ENCODE measurements at regions of chr19 and their contacts with region 1.

Region 1: DNA sequence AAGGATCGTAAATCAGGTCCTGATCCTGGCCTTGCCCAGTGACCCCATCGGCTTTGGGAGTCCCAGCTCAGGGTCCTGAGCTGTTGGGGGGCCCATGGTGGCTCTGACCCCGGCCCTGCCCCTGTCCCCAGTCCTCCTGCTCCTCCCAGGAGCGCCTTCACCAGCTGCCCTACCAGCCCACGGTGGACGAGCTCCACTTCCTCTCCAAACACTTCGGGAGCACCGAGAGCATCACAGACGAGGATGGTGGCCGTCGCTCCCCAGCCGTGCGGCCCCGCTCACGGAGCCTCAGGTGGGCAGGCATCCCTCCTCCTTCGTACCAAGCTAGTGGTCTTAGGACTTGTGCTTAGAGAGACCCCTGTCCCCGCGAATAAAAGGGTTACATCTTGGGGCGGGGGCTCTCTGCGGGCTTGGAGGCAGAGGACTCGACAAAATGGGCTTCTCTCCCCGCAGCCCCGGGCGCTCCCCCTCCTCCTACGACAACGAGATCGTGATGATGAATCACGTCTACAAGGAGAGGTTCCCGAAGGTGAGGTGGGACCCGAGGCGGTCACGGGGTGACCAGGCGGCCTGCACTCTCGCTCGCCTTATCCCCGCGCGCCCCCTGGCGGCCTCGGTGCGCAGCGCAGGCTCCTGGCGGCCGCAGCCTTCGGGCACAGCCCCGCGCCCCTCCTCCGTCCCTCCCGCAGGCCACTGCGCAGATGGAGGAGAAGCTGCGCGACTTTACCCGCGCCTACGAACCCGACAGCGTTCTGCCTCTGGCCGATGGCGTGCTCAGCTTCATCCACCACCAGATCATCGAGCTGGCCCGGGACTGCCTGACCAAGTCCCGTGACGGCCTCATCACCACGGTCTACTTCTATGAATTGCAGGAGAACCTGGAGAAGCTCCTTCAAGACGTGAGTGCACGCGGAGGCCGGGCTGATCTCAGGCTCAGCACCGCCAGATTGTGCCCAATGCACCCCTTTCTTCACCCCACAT is 9.1 kb downstream of the MAST1 start:
- DNase-seq: peak; percentile 84
- H3K4me3 Mint-ChIP-seq: peak overlapping the region; percentile 53
- H3K27ac Mint-ChIP-seq: no peak overlapping the region
- H3K4me1 Mint-ChIP-seq: peaks cover 8% of the 10 kb centered on the region
- H3K27me3 Mint-ChIP-seq: peaks cover 12% of the 10 kb centered on the region

Region 2: GRCh38 chr19:12745166-12745897 is 102.1 kb before region 1 on chr19:
- intact Hi-C with region 1: no loop called
- DNase-seq: no peak
- H3K4me3 Mint-ChIP-seq: no peak overlapping the region
- H3K27ac Mint-ChIP-seq: no peak overlapping the region
- H3K4me1 Mint-ChIP-seq: no peaks in the 10 kb centered on the region
- H3K27me3 Mint-ChIP-seq: no peaks in the 10 kb centered on the region

Region 3: GRCh38 chr19:12757544-12758274 is 89.7 kb before region 1 on chr19:
- intact Hi-C with region 1: loop called (anchors 1 kb)
- DNase-seq: peak; percentile 68
- H3K4me3 Mint-ChIP-seq: peak overlapping the region; percentile 53
- H3K27ac Mint-ChIP-seq: no peak overlapping the region
- H3K4me1 Mint-ChIP-seq: peaks cover 5% of the 10 kb centered on the region
- H3K27me3 Mint-ChIP-seq: peaks cover 8% of the 10 kb centered on the region

Region 4: DNA sequence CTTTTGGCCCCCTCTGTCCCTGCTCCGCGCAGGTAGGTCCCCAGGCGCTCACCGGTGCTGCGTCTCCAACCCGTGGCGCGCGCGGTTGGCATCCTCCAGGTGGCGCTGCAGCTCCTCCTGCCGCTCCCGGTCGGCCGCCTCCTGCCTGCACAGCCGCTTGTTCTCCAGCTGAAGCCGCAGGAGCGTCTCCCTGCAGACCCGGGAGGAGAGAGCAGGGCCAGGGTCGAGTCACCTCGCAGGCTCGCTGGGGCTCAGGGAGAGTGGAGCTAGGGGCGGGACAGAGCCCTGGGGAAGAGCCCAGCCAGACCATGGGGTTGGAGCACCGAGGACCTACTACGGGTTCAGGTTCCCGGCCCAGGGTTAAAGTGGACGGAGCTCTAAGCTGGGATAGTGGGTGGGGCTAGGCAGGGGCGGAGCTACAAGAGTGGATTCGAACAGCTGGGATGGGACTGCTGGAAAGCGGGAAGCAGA is 81.4 kb before region 1 on chr19:
- intact Hi-C with region 1: loop called (anchors 1 kb)
- DNase-seq: peak; percentile 78
- H3K4me3 Mint-ChIP-seq: peak overlapping the region; percentile 51
- H3K27ac Mint-ChIP-seq: no peak overlapping the region
- H3K4me1 Mint-ChIP-seq: no peaks in the 10 kb centered on the region
- H3K27me3 Mint-ChIP-seq: no peaks in the 10 kb centered on the region

Region 5: DNA sequence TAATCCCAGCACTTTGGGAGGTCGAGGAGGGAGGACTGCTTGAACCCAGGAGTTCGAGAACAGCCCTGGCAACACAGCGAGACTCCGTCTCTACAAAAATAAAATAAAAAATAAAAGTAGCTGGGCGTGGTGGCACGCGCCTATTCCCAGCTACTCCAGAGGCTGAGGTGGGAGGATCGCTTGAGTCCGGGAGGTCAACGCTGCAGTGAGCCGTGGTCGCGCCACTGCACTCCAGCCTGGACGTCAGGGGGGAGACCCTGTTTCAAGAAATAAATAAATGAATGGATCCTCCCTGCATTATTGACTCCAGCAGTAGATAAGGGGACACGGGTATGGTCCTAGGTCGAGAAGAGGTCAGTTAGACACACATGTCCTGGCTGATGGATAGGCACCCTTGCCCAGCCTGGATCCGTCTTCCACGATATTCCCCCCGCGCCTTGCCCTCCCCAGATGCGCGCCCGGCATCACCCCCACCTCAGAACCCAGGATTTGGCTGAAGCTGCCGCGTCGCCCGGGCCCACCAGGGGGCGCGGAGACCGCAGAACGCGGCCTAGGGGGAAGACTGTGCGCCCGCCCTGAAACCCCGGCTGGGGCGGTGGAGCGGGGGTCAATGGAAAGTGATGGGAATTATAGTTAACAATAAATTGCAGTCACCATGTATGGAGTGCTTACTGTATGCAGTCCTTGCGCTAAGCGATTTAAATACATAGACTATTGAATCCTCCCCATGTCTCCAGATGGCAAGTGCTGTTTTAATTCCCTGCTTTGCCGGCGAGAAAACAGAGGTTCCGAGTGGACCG is 70.0 kb before region 1 on chr19:
- intact Hi-C with region 1: loop called (anchors 1 kb)
- DNase-seq: peak; percentile 78
- H3K4me3 Mint-ChIP-seq: peak overlapping the region; percentile 86
- H3K27ac Mint-ChIP-seq: peak overlapping the region; percentile 86
- H3K4me1 Mint-ChIP-seq: peaks cover 44% of the 10 kb centered on the region
- H3K27me3 Mint-ChIP-seq: no peaks in the 10 kb centered on the region

Region 6: GRCh38 chr19:12796146-12797071 is 51.0 kb before region 1 on chr19:
- intact Hi-C with region 1: loop called (anchors 1 kb)
- DNase-seq: peak; percentile 75
- H3K4me3 Mint-ChIP-seq: peak overlapping the region; percentile 72
- H3K27ac Mint-ChIP-seq: peak overlapping the region; percentile 88
- H3K4me1 Mint-ChIP-seq: peaks cover 35% of the 10 kb centered on the region
- H3K27me3 Mint-ChIP-seq: no peaks in the 10 kb centered on the region

Region 7: GRCh38 chr19:12806239-12807081 is 41.0 kb before region 1 on chr19 and contains the start of gene RNASEH2A:
- intact Hi-C with region 1: loop called (anchors 2 kb)
- DNase-seq: peak; percentile 89
- H3K4me3 Mint-ChIP-seq: peak within 1 kb of the TSS; percentile 96
- H3K27ac Mint-ChIP-seq: peak within 1 kb of the TSS; percentile 89
- H3K4me1 Mint-ChIP-seq: peaks cover 17% of the 10 kb centered on the region
- H3K27me3 Mint-ChIP-seq: no peaks in the 10 kb centered on the region
- total RNA-seq, gene RNASEH2A: 36.1 and 37.5 TPM in 2 replicates

Region 8: GRCh38 chr19:12913011-12913561 is 65.6 kb after region 1 on chr19:
- intact Hi-C with region 1: no loop called
- DNase-seq: no peak
- H3K4me3 Mint-ChIP-seq: no peak overlapping the region
- H3K27ac Mint-ChIP-seq: peak overlapping the region; percentile 55
- H3K4me1 Mint-ChIP-seq: peaks cover 19% of the 10 kb centered on the region
- H3K27me3 Mint-ChIP-seq: no peaks in the 10 kb centered on the region

Region 9: DNA sequence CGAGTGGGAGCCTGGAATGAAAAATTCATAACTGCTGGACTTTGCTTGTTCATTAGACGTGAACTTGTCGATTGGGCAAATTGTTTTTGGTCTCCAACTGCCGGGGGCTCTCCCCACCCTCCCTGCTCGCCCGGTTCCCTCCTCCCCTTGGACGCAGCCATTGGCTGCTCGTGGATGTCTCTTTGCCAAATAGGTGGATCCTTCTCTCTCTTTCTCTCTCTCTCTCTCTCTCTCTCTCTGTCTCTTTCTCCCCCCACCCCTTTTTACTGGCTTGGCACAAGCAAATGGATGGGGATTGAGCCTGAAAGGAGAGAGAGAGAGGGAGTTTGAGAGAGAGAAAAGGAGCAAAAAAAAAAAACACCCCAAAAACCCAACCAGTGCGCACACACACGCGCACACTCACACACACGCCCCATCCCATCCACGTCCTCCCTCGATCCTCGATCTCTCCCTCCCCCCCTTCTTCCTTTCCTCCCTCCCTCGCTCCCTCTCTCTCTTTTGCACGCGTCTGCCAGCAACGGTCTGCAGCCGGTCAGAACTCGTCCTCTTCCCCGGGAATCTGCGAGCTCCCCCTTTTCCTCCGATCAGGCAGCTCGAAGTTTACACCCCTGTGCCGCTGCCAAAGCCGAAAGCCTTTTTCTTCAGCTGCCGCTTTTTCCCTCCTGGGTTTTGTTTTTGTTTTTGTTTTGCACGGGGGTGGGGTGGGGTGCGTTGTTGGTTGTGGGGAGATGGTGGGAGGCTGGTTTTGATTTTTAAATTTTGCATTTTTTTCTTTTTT is 175.6 kb after region 1 on chr19:
- intact Hi-C with region 1: no loop called
- DNase-seq: no peak
- H3K4me3 Mint-ChIP-seq: peak overlapping the region; percentile 75
- H3K27ac Mint-ChIP-seq: no peak overlapping the region
- H3K4me1 Mint-ChIP-seq: peaks cover 17% of the 10 kb centered on the region
- H3K27me3 Mint-ChIP-seq: peaks cover 42% of the 10 kb centered on the region